ENCODE measurements at regions of chr5 and their contacts with region 1.

Region 1: GRCh38 chr5:95927927-95928723 is 33.5 kb downstream of the ELL2 start:
- DNase-seq: peak; percentile 91
- ATAC-seq: peak; percentile 61
- H3K4me3 ChIP-seq: peak overlapping the region; percentile 22
- H3K27ac ChIP-seq: peak overlapping the region; percentile 91
- H3K4me1 ChIP-seq: peaks cover 65% of the 10 kb centered on the region
- H3K27me3 ChIP-seq: no peaks in the 10 kb centered on the region
- CTCF ChIP-seq: no peak
- EP300 ChIP-seq: peak; percentile 95 to 97
- POLR2A ChIP-seq: no peak
- RAD21 ChIP-seq: 0 out of 2 replicates have a peak, but pooled peaks have one; percentile 12

Region 2: GRCh38 chr5:95664204-95664786 is 263.8 kb before region 1 on chr5:
- CTCF ChIA-PET with region 1: no interaction called
- POLR2A ChIA-PET with region 1: no interaction called
- RAD21 ChIA-PET with region 1: no interaction called
- SMC1A ChIA-PET with region 1: no interaction called
- in situ Hi-C with region 1: no loop called
- intact Hi-C with region 1: no loop called
- DNase-seq: peak; percentile 11
- ATAC-seq: peak; percentile 38; the same call in 2 of the 3 replicates
- H3K4me3 ChIP-seq: no peak overlapping the region
- H3K27ac ChIP-seq: no peak overlapping the region
- H3K4me1 ChIP-seq: no peaks in the 10 kb centered on the region
- H3K27me3 ChIP-seq: no peaks in the 10 kb centered on the region
- CTCF ChIP-seq: peak; percentile 66 to 84 (median 80)
- EP300 ChIP-seq: no peak
- POLR2A ChIP-seq: no peak
- RAD21 ChIP-seq: peak; percentile 76

Region 3: GRCh38 chr5:95858661-95859326 is 69.3 kb before region 1 on chr5:
- CTCF ChIA-PET with region 1: interaction called, 3 read pairs
- POLR2A ChIA-PET with region 1: interaction called, 4 read pairs
- RAD21 ChIA-PET with region 1: interaction called, 19 read pairs
- SMC1A ChIA-PET with region 1: interaction called, 8 read pairs
- in situ Hi-C with region 1: no loop called
- intact Hi-C with region 1: no loop called
- DNase-seq: peak; percentile 67
- ATAC-seq: peak; percentile 95
- H3K4me3 ChIP-seq: no peak overlapping the region; the same call in 1 of the 2 replicates
- H3K27ac ChIP-seq: no peak overlapping the region
- H3K4me1 ChIP-seq: peaks cover 21% of the 10 kb centered on the region
- H3K27me3 ChIP-seq: no peaks in the 10 kb centered on the region
- CTCF ChIP-seq: peak; percentile 96 to 99 (median 98)
- EP300 ChIP-seq: no peak
- POLR2A ChIP-seq: no peak
- RAD21 ChIP-seq: peak; percentile 99

Region 4: GRCh38 chr5:95878417-95879323 is 49.5 kb before region 1 on chr5:
- CTCF ChIA-PET with region 1: no interaction called
- POLR2A ChIA-PET with region 1: interaction called, 6 read pairs
- RAD21 ChIA-PET with region 1: interaction called, 36 read pairs
- SMC1A ChIA-PET with region 1: interaction called, 62 read pairs
- in situ Hi-C with region 1: no loop called
- intact Hi-C with region 1: no loop called
- DNase-seq: peak; percentile 39
- ATAC-seq: peak; percentile 87
- H3K4me3 ChIP-seq: no peak overlapping the region
- H3K27ac ChIP-seq: no peak overlapping the region
- H3K4me1 ChIP-seq: peaks cover 3% of the 10 kb centered on the region; the same call in 1 of the 2 replicates
- H3K27me3 ChIP-seq: no peaks in the 10 kb centered on the region; a peak in 1 of 4 replicates
- CTCF ChIP-seq: no peak
- EP300 ChIP-seq: no peak
- POLR2A ChIP-seq: no peak
- RAD21 ChIP-seq: no peak

Region 5: DNA sequence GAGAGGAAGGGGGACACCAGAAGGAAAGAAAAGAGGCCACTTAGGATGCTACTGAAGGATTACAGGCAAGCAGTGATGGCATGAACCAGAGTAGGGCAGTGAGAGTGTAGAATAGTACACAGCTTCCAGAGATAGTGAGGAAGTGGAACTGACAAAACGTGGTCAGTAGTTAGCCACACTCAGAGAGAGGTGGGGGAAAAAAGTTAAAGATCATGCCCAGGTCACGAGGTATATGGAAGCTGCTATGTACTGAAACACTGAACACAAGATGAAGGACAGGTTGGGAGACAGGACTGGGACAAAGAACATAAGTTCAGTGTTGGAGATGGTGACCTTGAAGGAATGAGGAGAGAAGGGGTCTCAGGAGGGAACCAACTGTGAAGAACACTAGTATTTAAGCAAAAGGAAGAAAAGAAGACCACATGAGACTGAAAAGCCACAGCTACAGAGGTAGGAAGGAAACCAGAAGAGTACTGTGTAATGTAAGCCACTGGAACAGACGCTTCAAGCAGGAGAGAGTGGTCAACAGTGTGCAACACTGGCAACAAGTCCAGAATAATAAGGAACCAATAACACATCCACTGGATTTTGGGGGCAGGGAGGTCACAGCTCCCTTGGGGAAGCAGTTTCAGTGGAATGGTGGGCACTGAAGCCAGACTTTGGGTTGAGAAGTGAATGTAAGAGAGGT is 12.0 kb before region 1 on chr5:
- CTCF ChIA-PET with region 1: interaction called, 8 read pairs
- POLR2A ChIA-PET with region 1: interaction called, 14 read pairs
- RAD21 ChIA-PET with region 1: interaction called, 12 read pairs
- SMC1A ChIA-PET with region 1: interaction called, 27 read pairs
- in situ Hi-C with region 1: no loop called
- intact Hi-C with region 1: no loop called
- DNase-seq: no peak
- ATAC-seq: peak; percentile 79
- H3K4me3 ChIP-seq: no peak overlapping the region
- H3K27ac ChIP-seq: peak overlapping the region; percentile 20; the same call in 1 of the 2 replicates
- H3K4me1 ChIP-seq: peaks cover 38% of the 10 kb centered on the region
- H3K27me3 ChIP-seq: no peaks in the 10 kb centered on the region
- CTCF ChIP-seq: no peak
- EP300 ChIP-seq: no peak
- POLR2A ChIP-seq: no peak
- RAD21 ChIP-seq: no peak

Region 6: DNA sequence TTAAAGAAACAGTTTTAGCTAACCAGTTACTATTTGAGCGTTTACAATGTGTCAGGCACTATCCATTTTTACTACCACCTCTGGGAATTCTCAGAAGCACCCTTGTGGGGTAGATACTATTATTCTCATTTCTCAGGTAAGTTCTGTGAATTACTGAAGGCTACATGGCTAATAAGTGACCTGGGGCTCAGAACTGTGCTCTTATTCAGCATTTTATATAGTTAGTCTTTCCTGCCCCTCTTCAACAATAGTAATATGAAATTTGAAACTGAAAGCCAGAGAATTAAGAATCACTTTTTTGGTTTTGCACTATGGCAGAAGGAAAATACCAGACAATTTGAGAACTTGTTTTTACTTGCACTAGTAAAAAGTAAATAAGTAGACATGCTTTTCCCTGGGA is 21.7 kb after region 1 on chr5:
- CTCF ChIA-PET with region 1: interaction called, 54 read pairs
- POLR2A ChIA-PET with region 1: interaction called, 16 read pairs
- RAD21 ChIA-PET with region 1: interaction called, 42 read pairs
- SMC1A ChIA-PET with region 1: interaction called, 62 read pairs
- in situ Hi-C with region 1: no loop called
- intact Hi-C with region 1: loop called (anchors 2 kb)
- DNase-seq: no peak
- ATAC-seq: peak; percentile 68
- H3K4me3 ChIP-seq: peak overlapping the region; percentile 15; the same call in 1 of the 2 replicates
- H3K27ac ChIP-seq: peak overlapping the region; percentile 67
- H3K4me1 ChIP-seq: peaks cover 18% of the 10 kb centered on the region; the same call in 1 of the 2 replicates
- H3K27me3 ChIP-seq: no peaks in the 10 kb centered on the region
- CTCF ChIP-seq: no peak
- EP300 ChIP-seq: no peak
- POLR2A ChIP-seq: no peak
- RAD21 ChIP-seq: no peak

Region 7: DNA sequence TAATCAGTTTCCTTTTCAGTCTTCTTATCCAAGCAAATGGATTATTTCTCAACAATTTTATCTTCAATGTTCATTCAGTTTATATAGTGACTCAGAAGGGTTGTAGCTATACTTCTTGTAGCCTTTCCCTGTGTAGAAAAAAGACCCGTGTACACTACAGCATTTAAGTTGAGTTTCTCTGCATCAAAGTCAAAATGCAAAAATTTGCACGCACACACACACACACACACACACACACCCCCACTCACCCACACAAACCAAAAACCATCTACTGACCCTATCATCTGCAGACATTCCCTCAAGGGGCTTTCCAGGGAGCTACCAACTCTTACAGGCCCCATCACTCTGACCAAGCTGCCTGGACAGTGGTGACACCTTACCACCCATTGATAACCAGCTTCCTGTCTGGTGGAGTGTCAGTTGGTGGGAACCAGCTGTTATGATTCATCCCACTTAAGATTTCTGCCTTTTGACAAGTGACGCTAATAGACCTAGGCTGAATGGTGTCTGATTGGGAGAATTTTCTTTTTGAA is 45.7 kb after region 1 on chr5:
- CTCF ChIA-PET with region 1: interaction called, 3 read pairs
- POLR2A ChIA-PET with region 1: interaction called, 4 read pairs
- RAD21 ChIA-PET with region 1: interaction called, 7 read pairs
- SMC1A ChIA-PET with region 1: interaction called, 10 read pairs
- in situ Hi-C with region 1: no loop called
- intact Hi-C with region 1: loop called (anchors 1 kb)
- DNase-seq: peak; percentile 87
- ATAC-seq: peak; percentile 99
- H3K4me3 ChIP-seq: no peak overlapping the region
- H3K27ac ChIP-seq: no peak overlapping the region; the same call in 1 of the 2 replicates
- H3K4me1 ChIP-seq: peaks cover 10% of the 10 kb centered on the region
- H3K27me3 ChIP-seq: no peaks in the 10 kb centered on the region
- CTCF ChIP-seq: no peak
- EP300 ChIP-seq: peak; percentile 52 to 71; a peak in 3 of 4 replicates
- POLR2A ChIP-seq: no peak
- RAD21 ChIP-seq: no peak

Region 8: GRCh38 chr5:96112123-96112670 is 184.1 kb after region 1 on chr5:
- CTCF ChIA-PET with region 1: no interaction called
- POLR2A ChIA-PET with region 1: no interaction called
- RAD21 ChIA-PET with region 1: no interaction called
- SMC1A ChIA-PET with region 1: no interaction called
- in situ Hi-C with region 1: no loop called
- intact Hi-C with region 1: no loop called
- DNase-seq: no peak
- ATAC-seq: no peak
- H3K4me3 ChIP-seq: no peak overlapping the region
- H3K27ac ChIP-seq: no peak overlapping the region
- H3K4me1 ChIP-seq: no peaks in the 10 kb centered on the region
- H3K27me3 ChIP-seq: no peaks in the 10 kb centered on the region
- CTCF ChIP-seq: no peak
- EP300 ChIP-seq: no peak
- POLR2A ChIP-seq: no peak
- RAD21 ChIP-seq: no peak

Measured in GM12878 (cell line).